PC-9 (cell line): ENCODE measurements at regions of chr9 and their contacts with region 1.

Region 1: DNA sequence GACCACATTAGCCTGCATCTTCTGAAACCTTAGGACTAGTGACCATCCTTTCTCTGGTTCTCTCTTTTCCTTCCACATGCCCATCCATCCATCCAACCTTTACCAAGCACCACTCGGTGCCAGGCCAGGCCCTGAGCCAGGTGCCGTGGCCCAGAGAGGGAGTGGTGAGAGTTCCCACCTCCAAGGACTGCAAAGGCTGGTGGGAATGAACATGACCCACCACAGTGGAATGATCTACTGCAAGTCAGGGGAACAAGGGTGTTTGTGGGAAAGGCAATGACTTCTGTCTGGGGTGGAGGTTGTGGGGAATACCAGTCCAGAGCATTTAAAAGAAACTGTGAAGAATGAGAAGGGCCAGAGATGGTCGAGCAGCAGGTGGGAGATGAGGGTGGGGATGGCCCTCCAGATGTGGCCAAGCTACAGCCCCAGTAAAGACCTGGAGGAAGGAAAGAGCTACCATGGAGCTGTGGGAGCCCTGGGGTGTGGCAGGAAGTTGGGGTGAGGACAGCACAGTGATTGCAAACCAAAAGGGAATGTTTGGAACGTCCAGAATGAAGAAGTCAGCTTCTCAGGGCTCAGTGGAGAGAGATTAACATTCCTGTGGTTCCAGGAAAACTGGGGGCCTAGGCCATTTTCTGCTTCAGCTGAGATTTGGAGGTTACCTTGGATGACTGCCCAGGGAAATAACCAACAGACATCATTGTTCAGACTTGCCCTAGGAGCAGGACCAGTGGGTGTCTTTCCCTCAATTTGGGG is 30.6 kb upstream of the CORO2A start:
- DNase-seq: peak; percentile 92 to 98
- H3K4me3 ChIP-seq: no peak overlapping the region
- H3K27ac ChIP-seq: peak overlapping the region; percentile 93
- H3K4me1 ChIP-seq: peaks cover 98% of the 10 kb centered on the region
- H3K27me3 ChIP-seq: no peaks in the 10 kb centered on the region
- CTCF ChIP-seq: no peak

Region 2: GRCh38 chr9:96686548-96687335 is 1536.3 kb before region 1 on chr9:
- CTCF ChIA-PET with region 1: no interaction called
- POLR2A ChIA-PET with region 1: interaction called, 10 read pairs
- intact Hi-C with region 1: no loop called
- DNase-seq: peak; percentile 53 to 91
- H3K4me3 ChIP-seq: peak overlapping the region; percentile 56
- H3K27ac ChIP-seq: no peak overlapping the region
- H3K4me1 ChIP-seq: peaks cover 3% of the 10 kb centered on the region; the same call in 1 of the 2 replicates
- H3K27me3 ChIP-seq: no peaks in the 10 kb centered on the region
- CTCF ChIP-seq: peak; percentile 66

Region 3: GRCh38 chr9:98129451-98129881 is 93.6 kb before region 1 on chr9:
- CTCF ChIA-PET with region 1: no interaction called
- POLR2A ChIA-PET with region 1: no interaction called
- intact Hi-C with region 1: no loop called
- DNase-seq: no peak
- H3K4me3 ChIP-seq: no peak overlapping the region
- H3K27ac ChIP-seq: no peak overlapping the region
- H3K4me1 ChIP-seq: no peaks in the 10 kb centered on the region
- H3K27me3 ChIP-seq: no peaks in the 10 kb centered on the region
- CTCF ChIP-seq: no peak

Region 4: DNA sequence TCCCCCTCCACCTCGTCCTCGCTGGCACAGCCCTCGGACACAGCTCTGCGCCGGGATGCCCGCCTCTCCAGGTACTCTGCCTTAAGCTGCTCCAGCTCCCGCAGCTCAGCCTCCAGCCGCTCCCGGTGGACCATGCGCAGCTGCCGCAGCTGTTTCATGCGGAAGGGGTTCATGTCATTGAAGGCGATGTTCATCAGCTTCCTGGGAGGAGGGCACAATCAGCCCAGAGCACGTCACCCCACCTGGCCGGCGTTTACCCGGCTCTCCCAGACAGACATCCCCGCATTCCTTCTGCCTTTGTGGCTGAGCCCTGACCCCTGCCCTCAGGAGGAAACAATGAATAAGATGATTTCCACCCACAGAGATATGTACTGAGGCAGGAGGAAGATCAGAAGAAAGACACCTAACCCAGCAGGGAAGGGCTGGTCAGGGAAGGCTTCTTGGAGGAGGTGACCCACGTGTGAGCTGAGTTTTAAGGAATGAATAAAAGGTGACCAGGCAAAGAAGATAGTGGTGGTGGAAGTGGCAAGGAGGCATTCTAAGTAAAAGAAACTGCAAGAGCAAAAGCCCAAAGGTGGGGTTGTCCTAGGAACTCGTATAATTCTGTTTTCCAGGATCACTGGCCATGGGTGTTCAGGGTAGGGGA is 23.6 kb before region 1 on chr9:
- CTCF ChIA-PET with region 1: no interaction called
- POLR2A ChIA-PET with region 1: no interaction called
- intact Hi-C with region 1: no loop called
- DNase-seq: no peak
- H3K4me3 ChIP-seq: no peak overlapping the region
- H3K27ac ChIP-seq: no peak overlapping the region
- H3K4me1 ChIP-seq: no peaks in the 10 kb centered on the region
- H3K27me3 ChIP-seq: no peaks in the 10 kb centered on the region
- CTCF ChIP-seq: no peak

Region 5: GRCh38 chr9:98243946-98244670 is 21.0 kb after region 1 on chr9:
- CTCF ChIA-PET with region 1: no interaction called
- POLR2A ChIA-PET with region 1: interaction called, 10 read pairs
- intact Hi-C with region 1: loop called (anchors 1 kb)
- DNase-seq: peak; percentile 75 to 83
- H3K4me3 ChIP-seq: no peak overlapping the region
- H3K27ac ChIP-seq: peak overlapping the region; percentile 56
- H3K4me1 ChIP-seq: peaks cover 58% of the 10 kb centered on the region
- H3K27me3 ChIP-seq: no peaks in the 10 kb centered on the region
- CTCF ChIP-seq: no peak

Region 6: GRCh38 chr9:98249774-98250173 is 26.7 kb after region 1 on chr9:
- CTCF ChIA-PET with region 1: no interaction called
- POLR2A ChIA-PET with region 1: interaction called, 7 read pairs
- intact Hi-C with region 1: loop called (anchors 1 kb)
- DNase-seq: peak in 1 of 2 experiments; percentile 53
- H3K4me3 ChIP-seq: no peak overlapping the region
- H3K27ac ChIP-seq: peak overlapping the region; percentile 90
- H3K4me1 ChIP-seq: peaks cover 95% of the 10 kb centered on the region
- H3K27me3 ChIP-seq: no peaks in the 10 kb centered on the region
- CTCF ChIP-seq: no peak

Region 7: DNA sequence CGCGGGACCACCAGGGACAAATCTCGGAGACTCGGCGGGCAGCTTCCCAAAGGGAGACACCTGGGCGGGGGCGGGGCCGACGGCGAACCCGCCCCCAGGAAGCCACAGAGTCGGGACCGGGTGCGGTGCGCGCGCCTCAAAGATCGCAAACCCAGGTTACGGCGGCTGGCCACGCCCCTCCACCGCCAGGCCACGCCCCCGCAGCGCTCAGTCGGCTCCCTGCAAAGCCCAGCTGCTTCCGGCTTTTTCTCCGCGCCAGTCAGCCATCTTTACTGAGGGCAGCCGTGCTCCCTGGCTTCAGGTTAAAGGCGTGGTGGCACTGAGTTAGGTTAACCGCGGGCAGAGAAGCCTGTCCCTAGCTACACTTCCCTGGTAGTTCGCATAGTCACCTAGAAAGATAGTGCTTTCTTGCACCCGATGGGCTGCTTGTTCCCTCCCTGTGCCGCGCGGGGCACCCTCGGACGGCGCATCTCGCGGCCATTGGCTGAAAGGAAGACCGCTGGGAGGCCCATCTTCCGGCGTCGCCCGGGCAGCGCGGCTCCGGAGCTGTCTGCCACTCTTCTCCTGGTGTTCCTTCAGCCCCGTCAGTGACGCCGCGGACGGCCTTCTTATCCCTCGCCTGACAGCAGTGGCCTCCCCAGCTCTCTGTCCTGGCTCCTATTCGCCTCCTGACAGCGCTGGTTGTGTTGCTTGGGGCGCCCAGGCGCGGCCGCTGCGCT is 32.7 kb after region 1 on chr9 and contains the start of gene TBC1D2:
- CTCF ChIA-PET with region 1: no interaction called
- POLR2A ChIA-PET with region 1: interaction called, 7 read pairs
- intact Hi-C with region 1: loop called (anchors 1 kb)
- DNase-seq: peak; percentile 85 to 99
- H3K4me3 ChIP-seq: peak within 1 kb of the TSS; percentile 76
- H3K27ac ChIP-seq: peak within 1 kb of the TSS; percentile 82
- H3K4me1 ChIP-seq: peaks cover 49% of the 10 kb centered on the region
- H3K27me3 ChIP-seq: no peaks in the 10 kb centered on the region
- CTCF ChIP-seq: 0 out of 2 replicates have a peak, but pooled peaks have one; percentile 21
- total RNA-seq, gene TBC1D2: 42.9 and 44.7 TPM in 2 replicates

Region 8: GRCh38 chr9:98791147-98792095 is 568.4 kb after region 1 on chr9:
- CTCF ChIA-PET with region 1: no interaction called
- POLR2A ChIA-PET with region 1: no interaction called
- intact Hi-C with region 1: loop called (anchors 1 kb)
- DNase-seq: peak; percentile 92 to 96
- H3K4me3 ChIP-seq: 0 out of 2 replicates have a peak overlapping the region, but pooled peaks have one; percentile 30
- H3K27ac ChIP-seq: peak overlapping the region; percentile 70
- H3K4me1 ChIP-seq: peaks cover 59% of the 10 kb centered on the region
- H3K27me3 ChIP-seq: no peaks in the 10 kb centered on the region
- CTCF ChIP-seq: peak; percentile 100